Activated naive CD4-positive, alpha-beta T cell treated with anti-CD3 and anti-CD28 coated beads for 36 hours (primary cell): ENCODE measurements at regions of chr12 and their contacts with region 1.

Region 1: DNA sequence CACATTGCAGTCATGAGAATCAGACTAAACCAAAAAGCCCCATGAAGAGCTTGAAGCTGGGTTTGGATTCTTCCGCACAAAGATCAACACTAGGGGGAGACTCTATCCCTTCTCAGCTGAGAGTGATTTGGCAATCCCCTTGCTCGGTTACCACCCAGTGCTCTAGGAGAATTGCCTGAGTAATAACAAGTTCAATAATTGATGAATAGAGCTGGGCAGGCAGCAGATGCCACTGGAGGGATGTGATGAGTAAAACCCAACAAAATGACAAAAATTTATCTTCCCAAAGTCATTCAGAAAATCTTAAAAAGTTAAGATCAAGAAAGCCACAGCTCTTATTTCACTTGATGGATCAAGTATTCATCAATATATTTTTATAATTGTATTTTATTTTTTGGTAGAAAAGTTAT is 185.6 kb upstream of the ARID2 start:
- DNase-seq: peak; percentile 70
- H3K4me3 Mint-ChIP-seq: no peak overlapping the region
- H3K27ac Mint-ChIP-seq: no peak overlapping the region
- H3K4me1 Mint-ChIP-seq: no peaks in the 10 kb centered on the region
- H3K27me3 Mint-ChIP-seq: peaks cover 6% of the 10 kb centered on the region

Region 2: GRCh38 chr12:45170456-45171042 is 373.4 kb before region 1 on chr12:
- CTCF ChIA-PET with region 1: interaction called, 6 read pairs
- intact Hi-C with region 1: loop called (anchors 2 kb)
- DNase-seq: peak; percentile 92
- H3K4me3 Mint-ChIP-seq: no peak overlapping the region
- H3K27ac Mint-ChIP-seq: no peak overlapping the region
- H3K4me1 Mint-ChIP-seq: no peaks in the 10 kb centered on the region
- H3K27me3 Mint-ChIP-seq: no peaks in the 10 kb centered on the region

Region 3: GRCh38 chr12:45745861-45746277 is 202.0 kb after region 1 on chr12:
- CTCF ChIA-PET with region 1: interaction called, 27 read pairs
- intact Hi-C with region 1: loop called (anchors 1 kb)
- DNase-seq: no peak
- H3K4me3 Mint-ChIP-seq: no peak overlapping the region
- H3K27ac Mint-ChIP-seq: no peak overlapping the region
- H3K4me1 Mint-ChIP-seq: peaks cover 57% of the 10 kb centered on the region
- H3K27me3 Mint-ChIP-seq: no peaks in the 10 kb centered on the region

Region 4: DNA sequence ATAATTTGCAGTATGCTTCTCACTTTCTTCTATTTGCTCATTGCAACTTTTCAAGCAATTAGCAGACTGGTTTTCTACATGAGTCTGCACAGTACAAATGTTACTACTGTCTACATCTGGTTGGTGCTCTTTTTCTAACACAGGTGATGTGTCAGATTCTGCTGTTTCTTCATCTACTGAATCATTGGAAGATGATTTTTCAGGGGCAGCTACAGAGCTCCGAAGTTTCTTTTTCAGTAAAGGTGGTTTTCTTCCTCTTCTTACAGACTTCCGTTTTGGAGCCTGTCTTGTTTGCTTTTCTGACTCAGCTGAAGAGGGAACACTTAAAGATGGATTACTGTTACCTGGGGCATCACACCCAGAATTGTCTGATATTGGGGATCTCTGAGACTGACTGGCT is 384.4 kb after region 1 on chr12:
- CTCF ChIA-PET with region 1: interaction called, 3 read pairs
- intact Hi-C with region 1: loop called (anchors 10 kb)
- DNase-seq: no peak
- H3K4me3 Mint-ChIP-seq: no peak overlapping the region
- H3K27ac Mint-ChIP-seq: peak overlapping the region; percentile 52
- H3K4me1 Mint-ChIP-seq: peaks cover 11% of the 10 kb centered on the region
- H3K27me3 Mint-ChIP-seq: no peaks in the 10 kb centered on the region

Region 5: GRCh38 chr12:46071769-46072624 is 528.1 kb after region 1 on chr12:
- CTCF ChIA-PET with region 1: no interaction called
- intact Hi-C with region 1: loop called (anchors 5 kb)
- DNase-seq: peak; percentile 82
- H3K4me3 Mint-ChIP-seq: peak overlapping the region; percentile 20
- H3K27ac Mint-ChIP-seq: peak overlapping the region; percentile 19
- H3K4me1 Mint-ChIP-seq: peaks cover 3% of the 10 kb centered on the region
- H3K27me3 Mint-ChIP-seq: no peaks in the 10 kb centered on the region